HEK293 (cell line): ENCODE measurements at regions of chr18 and their contacts with region 1.

Region 1: GRCh38 chr18:23918401-23919032 is 96.0 kb upstream of the TTC39C start:
- H3K4me3 ChIP-seq: no peak overlapping the region
- H3K27ac ChIP-seq: no peak overlapping the region
- H3K4me1 ChIP-seq: no peaks in the 10 kb centered on the region
- CTCF ChIP-seq: no peak

Region 2: GRCh38 chr18:23837591-23837990 is 80.9 kb before region 1 on chr18:
- CTCF ChIA-PET with region 1: interaction called, 21 read pairs
- POLR2A ChIA-PET with region 1: no interaction called
- H3K4me3 ChIP-seq: no peak overlapping the region
- H3K27ac ChIP-seq: no peak overlapping the region
- H3K4me1 ChIP-seq: no peaks in the 10 kb centered on the region
- CTCF ChIP-seq: no peak

Region 3: DNA sequence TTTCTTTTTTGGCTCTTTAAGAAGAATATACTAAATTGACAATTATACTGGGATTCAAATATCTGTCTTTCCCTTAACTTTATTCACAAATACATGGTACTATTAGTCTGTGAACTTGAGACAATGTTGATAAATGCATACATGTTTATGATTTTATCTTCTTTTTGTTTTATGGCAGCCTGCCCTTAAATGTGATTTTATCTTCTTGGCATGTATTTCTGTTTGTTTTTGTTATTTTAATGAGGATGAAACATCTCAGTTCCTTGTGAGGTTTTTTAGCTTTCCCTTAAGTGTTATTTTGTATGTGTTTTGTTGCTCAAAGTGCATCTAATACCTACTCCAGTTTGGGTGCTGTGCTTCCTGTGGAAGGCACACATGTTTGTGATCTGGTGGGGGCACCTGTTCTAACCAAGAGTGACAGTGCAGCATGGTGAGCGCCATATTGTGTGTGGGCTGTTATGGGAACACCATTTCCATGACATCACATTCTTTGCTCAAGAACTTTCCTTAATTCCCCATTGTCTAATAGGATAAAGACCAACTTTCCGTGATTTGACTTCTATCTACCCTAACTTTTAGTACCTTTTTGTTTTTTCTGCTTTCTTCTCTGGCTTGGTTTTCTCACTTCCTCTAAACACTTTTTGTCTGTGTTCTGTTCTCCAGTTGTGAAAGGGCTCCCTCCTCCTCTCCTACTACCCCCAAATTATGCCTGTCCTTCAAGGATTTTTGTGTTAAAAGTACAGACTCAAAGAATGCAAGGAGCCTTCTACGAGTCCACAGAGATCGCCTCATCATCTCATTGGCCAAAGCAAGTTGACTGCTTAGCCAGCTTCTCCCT is 66.1 kb before region 1 on chr18:
- CTCF ChIA-PET with region 1: no interaction called
- POLR2A ChIA-PET with region 1: no interaction called
- H3K4me3 ChIP-seq: no peak overlapping the region
- H3K27ac ChIP-seq: no peak overlapping the region
- H3K4me1 ChIP-seq: no peaks in the 10 kb centered on the region
- CTCF ChIP-seq: no peak

Region 4: DNA sequence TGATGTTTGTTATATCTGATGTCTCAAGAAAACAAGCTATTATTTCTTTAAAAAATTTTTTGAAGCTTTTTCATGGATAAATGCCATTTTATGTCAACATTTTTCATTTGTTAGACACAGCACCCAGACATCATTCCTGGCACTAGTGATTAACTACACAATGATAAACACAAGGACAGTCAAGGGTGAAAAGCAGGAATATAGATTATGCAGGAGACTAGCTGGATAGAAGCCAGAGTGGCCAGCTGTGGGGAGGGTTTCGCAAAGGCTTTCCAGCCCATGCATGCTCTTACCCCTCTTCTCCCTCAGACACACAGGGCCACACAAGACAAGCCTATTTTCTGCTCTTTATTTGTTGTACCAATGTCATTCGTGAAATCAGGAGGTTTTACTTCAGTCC is 31.0 kb before region 1 on chr18:
- CTCF ChIA-PET with region 1: interaction called, 14 read pairs
- POLR2A ChIA-PET with region 1: interaction called, 3 read pairs
- H3K4me3 ChIP-seq: no peak overlapping the region
- H3K27ac ChIP-seq: no peak overlapping the region
- H3K4me1 ChIP-seq: peaks cover 5% of the 10 kb centered on the region; the same call in 1 of the 2 replicates
- CTCF ChIP-seq: no peak

Region 5: GRCh38 chr18:23934252-23934651 is 15.7 kb after region 1 on chr18:
- CTCF ChIA-PET with region 1: interaction called, 47 read pairs
- POLR2A ChIA-PET with region 1: no interaction called
- H3K4me3 ChIP-seq: no peak overlapping the region
- H3K27ac ChIP-seq: no peak overlapping the region
- H3K4me1 ChIP-seq: no peaks in the 10 kb centered on the region
- CTCF ChIP-seq: no peak

Region 6: GRCh38 chr18:24112874-24113615 is 194.5 kb after region 1 on chr18:
- CTCF ChIA-PET with region 1: interaction called, 14 read pairs
- POLR2A ChIA-PET with region 1: no interaction called
- H3K4me3 ChIP-seq: no peak overlapping the region
- H3K27ac ChIP-seq: no peak overlapping the region
- H3K4me1 ChIP-seq: no peaks in the 10 kb centered on the region
- CTCF ChIP-seq: no peak